ENCODE measurements at regions of chr1 and their contacts with region 1.

Region 1: GRCh38 chr1:205227584-205228006 is at the start of gene TMCC2:
- DNase-seq: peak; percentile 67 to 79 (median 70)
- H3K4me3 ChIP-seq: peak within 1 kb of the TSS; percentile 54 to 57
- H3K4me3 Mint-ChIP-seq: peak within 1 kb of the TSS; percentile 88 to 99 (median 94)
- H3K27ac ChIP-seq: no peak within 1 kb of the TSS
- H3K27ac Mint-ChIP-seq: peak within 1 kb of the TSS; percentile 53 to 97 (median 85)
- H3K4me1 ChIP-seq: peaks cover 25% of the 10 kb centered on the region
- H3K4me1 Mint-ChIP-seq: peaks cover 14 to 33% (median 23%) of the 10 kb centered on the region in 4 donors
- H3K27me3 ChIP-seq: peaks cover 5% of the 10 kb centered on the region
- H3K27me3 Mint-ChIP-seq: peaks cover 8 to 18% of the 10 kb centered on the region in 2 donors
- total RNA-seq, gene TMCC2: 0.90 to 1.2 TPM

Region 2: DNA sequence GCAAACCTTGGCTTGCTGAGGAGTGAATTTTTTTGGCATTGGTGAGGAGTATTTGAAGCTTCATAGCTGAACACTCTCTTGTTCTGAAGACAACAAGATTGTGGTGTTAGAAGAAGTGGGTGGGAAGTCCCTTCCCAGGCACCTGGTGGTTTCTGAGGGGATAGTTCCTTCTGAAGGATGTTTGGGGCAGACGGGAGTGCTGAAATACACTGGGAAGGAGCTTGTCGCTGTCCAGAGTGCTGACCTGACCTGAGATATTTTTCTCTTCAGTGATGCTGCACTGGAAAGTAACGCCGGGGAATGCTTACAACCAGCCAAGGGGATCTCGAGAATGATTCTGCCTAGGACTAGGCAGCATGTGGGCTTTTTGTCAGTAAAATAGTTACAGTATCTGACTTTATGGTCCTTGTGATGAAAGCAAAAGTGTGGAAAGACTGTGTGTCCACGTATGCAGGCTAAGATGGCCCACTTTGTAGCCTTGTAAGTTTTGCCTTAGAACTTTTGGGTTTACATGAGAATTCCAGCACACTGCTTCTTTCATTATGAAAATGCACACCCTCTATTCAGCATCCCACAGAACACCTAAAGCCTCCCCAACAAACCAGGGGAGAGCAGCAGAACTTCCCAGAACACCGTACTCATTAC is 390.0 kb before region 1 on chr1:
- CTCF ChIA-PET with region 1: no interaction called
- POLR2A ChIA-PET with region 1: no interaction called
- intact Hi-C with region 1: no loop called
- DNase-seq: peak in 2 of 5 donors; percentile 6 to 13
- H3K4me3 ChIP-seq: no peak overlapping the region
- H3K4me3 Mint-ChIP-seq: no peak overlapping the region
- H3K27ac ChIP-seq: no peak overlapping the region
- H3K27ac Mint-ChIP-seq: no peak overlapping the region
- H3K4me1 ChIP-seq: no peaks in the 10 kb centered on the region
- H3K4me1 Mint-ChIP-seq: no peaks in the 10 kb centered on the region
- H3K27me3 ChIP-seq: no peaks in the 10 kb centered on the region
- H3K27me3 Mint-ChIP-seq: peaks cover 15 to 25% of the 10 kb centered on the region in 2 donors

Region 3: GRCh38 chr1:205161076-205161475 is 66.5 kb before region 1 on chr1:
- CTCF ChIA-PET with region 1: no interaction called
- POLR2A ChIA-PET with region 1: no interaction called
- intact Hi-C with region 1: no loop called
- DNase-seq: no peak
- H3K4me3 ChIP-seq: no peak overlapping the region
- H3K4me3 Mint-ChIP-seq: no peak overlapping the region
- H3K27ac ChIP-seq: no peak overlapping the region
- H3K27ac Mint-ChIP-seq: no peak overlapping the region
- H3K4me1 ChIP-seq: no peaks in the 10 kb centered on the region
- H3K4me1 Mint-ChIP-seq: peaks cover 0 to 4% (median 0%) of the 10 kb centered on the region in 4 donors
- H3K27me3 ChIP-seq: no peaks in the 10 kb centered on the region
- H3K27me3 Mint-ChIP-seq: no peaks in the 10 kb centered on the region

Region 4: GRCh38 chr1:205211169-205211838 is 16.3 kb before region 1 on chr1 and contains the start of gene DSTYK:
- CTCF ChIA-PET with region 1: interaction called, 12 read pairs
- POLR2A ChIA-PET with region 1: interaction called, 37 read pairs
- intact Hi-C with region 1: loop called (anchors 1 kb)
- DNase-seq: peak; percentile 91 to 94 (median 93)
- H3K4me3 ChIP-seq: peak within 1 kb of the TSS; percentile 67 to 82
- H3K4me3 Mint-ChIP-seq: peak within 1 kb of the TSS; percentile 89 to 98 (median 96)
- H3K27ac ChIP-seq: peak within 1 kb of the TSS; percentile 80
- H3K27ac Mint-ChIP-seq: peak within 1 kb of the TSS; percentile 96 to 99 (median 97)
- H3K4me1 ChIP-seq: peaks cover 29% of the 10 kb centered on the region
- H3K4me1 Mint-ChIP-seq: peaks cover 22 to 48% (median 34%) of the 10 kb centered on the region in 4 donors
- H3K27me3 ChIP-seq: no peaks in the 10 kb centered on the region
- H3K27me3 Mint-ChIP-seq: peaks cover 0 to 5% of the 10 kb centered on the region in 2 donors
- total RNA-seq, gene DSTYK: 16.4 to 16.6 TPM

Region 5: GRCh38 chr1:205237526-205238484 is 10.2 kb after region 1 on chr1:
- CTCF ChIA-PET with region 1: interaction called, 22 read pairs
- POLR2A ChIA-PET with region 1: interaction called, 5 read pairs
- intact Hi-C with region 1: no loop called
- DNase-seq: no peak
- H3K4me3 ChIP-seq: no peak overlapping the region
- H3K4me3 Mint-ChIP-seq: no peak overlapping the region
- H3K27ac ChIP-seq: no peak overlapping the region
- H3K27ac Mint-ChIP-seq: peak overlapping the region in 1 of 7 donors; percentile 26
- H3K4me1 ChIP-seq: peaks cover 10% of the 10 kb centered on the region
- H3K4me1 Mint-ChIP-seq: peaks cover 0 to 8% (median 1%) of the 10 kb centered on the region in 4 donors
- H3K27me3 ChIP-seq: no peaks in the 10 kb centered on the region
- H3K27me3 Mint-ChIP-seq: peaks cover 3 to 13% of the 10 kb centered on the region in 2 donors

Measured in CD4-positive, alpha-beta memory T cell (primary cell).